ENCODE measurements at regions of chr2 and their contacts with region 1.

Region 1: GRCh38 chr2:69375494-69376353 is 11.3 kb downstream of the GFPT1 start:
- DNase-seq: no peak
- H3K4me3 Mint-ChIP-seq: no peak overlapping the region
- H3K27ac Mint-ChIP-seq: no peak overlapping the region
- H3K4me1 Mint-ChIP-seq: peaks cover 16% of the 10 kb centered on the region
- H3K27me3 Mint-ChIP-seq: no peaks in the 10 kb centered on the region

Region 2: DNA sequence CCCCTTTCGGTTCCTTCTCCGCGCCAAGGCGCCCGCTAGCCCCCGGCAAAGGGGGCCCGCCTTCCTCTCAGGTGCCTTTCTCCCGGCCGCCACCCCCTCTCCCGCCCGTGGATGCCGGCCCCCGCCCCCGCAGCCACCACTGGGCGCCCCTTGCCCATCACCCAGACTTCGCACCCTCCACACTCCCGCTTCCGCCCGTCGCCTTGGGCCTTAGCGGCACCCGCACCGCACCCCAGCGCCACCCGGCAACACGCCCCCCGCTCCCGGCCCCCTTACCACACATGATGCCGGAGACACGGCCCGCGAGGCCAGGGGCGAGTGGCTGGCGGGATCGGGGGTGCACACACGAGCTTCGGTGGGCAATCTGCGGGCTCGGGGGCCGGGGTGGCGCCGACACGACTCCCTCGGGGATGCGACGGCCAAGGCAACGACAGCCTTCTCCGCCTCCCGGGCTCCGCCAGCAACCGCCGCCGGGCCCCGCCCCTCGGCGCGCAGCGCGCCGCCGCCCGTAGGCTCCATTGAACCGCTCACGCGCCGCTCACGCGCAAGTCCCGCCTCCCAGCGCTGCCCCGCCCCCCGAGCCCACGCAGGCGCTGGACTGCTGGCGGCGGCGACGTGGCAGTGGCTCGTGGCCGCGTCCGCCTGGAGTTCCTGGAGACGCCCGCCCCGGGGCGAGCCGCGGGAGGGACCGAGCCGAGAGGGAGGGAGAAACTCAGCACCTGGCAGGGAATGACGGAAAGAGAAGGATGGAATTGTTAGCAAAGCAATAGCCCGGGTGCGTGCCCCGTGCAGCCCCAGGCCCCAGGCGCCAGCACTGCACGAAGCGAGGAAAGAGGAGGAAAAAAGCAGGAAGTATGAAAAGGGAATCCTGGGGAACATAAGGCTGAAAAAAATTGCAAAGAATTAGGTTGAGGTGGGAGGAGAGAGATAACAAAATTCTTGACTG is 11.3 kb after region 1 on chr2 and contains the start of gene GFPT1:
- CTCF ChIA-PET with region 1: interaction called, 13 read pairs
- POLR2A ChIA-PET with region 1: no interaction called
- intact Hi-C with region 1: no loop called
- DNase-seq: peak; percentile 95
- H3K4me3 Mint-ChIP-seq: peak within 1 kb of the TSS; percentile 85
- H3K27ac Mint-ChIP-seq: peak within 1 kb of the TSS; percentile 80
- H3K4me1 Mint-ChIP-seq: peaks cover 39% of the 10 kb centered on the region
- H3K27me3 Mint-ChIP-seq: no peaks in the 10 kb centered on the region
- total RNA-seq, gene GFPT1: 39.8 to 43.6 TPM

Region 3: GRCh38 chr2:69422198-69422597 is 46.5 kb after region 1 on chr2:
- CTCF ChIA-PET with region 1: no interaction called
- POLR2A ChIA-PET with region 1: no interaction called
- intact Hi-C with region 1: no loop called
- DNase-seq: no peak
- H3K4me3 Mint-ChIP-seq: no peak overlapping the region
- H3K27ac Mint-ChIP-seq: no peak overlapping the region
- H3K4me1 Mint-ChIP-seq: no peaks in the 10 kb centered on the region
- H3K27me3 Mint-ChIP-seq: no peaks in the 10 kb centered on the region

Region 4: DNA sequence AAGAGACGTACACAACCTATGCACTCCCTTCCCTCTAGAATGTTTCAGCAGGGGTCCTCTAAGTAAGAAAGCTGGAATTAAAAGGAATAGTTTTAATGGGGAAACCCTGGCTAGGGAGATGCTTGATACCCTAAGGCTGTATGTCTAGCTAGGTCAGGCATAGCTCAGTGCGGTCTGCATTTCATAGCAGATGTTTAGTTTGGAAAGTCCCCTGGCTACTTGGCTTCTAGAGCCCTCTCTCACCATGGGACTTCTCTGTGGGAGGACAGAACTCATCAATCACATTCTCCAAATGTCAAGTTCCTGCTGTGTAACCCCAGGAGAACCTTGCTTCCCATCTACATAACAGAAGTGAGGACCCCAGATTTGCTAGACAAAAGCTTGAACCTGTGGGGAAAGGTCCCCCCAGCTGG is 342.1 kb after region 1 on chr2:
- CTCF ChIA-PET with region 1: interaction called, 4 read pairs
- POLR2A ChIA-PET with region 1: no interaction called
- intact Hi-C with region 1: loop called (anchors 5 kb)
- DNase-seq: no peak
- H3K4me3 Mint-ChIP-seq: no peak overlapping the region
- H3K27ac Mint-ChIP-seq: no peak overlapping the region
- H3K4me1 Mint-ChIP-seq: peaks cover 14% of the 10 kb centered on the region
- H3K27me3 Mint-ChIP-seq: no peaks in the 10 kb centered on the region

Measured in activated CD4-positive, alpha-beta memory T cell treated with anti-CD3 and anti-CD28 coated beads for 36 hours (primary cell).